Activated CD8-positive, alpha-beta T cell treated with anti-CD3 and anti-CD28 coated beads for 36 hours (primary cell): ENCODE measurements at regions of chr12 and their contacts with region 1.

Region 1: DNA sequence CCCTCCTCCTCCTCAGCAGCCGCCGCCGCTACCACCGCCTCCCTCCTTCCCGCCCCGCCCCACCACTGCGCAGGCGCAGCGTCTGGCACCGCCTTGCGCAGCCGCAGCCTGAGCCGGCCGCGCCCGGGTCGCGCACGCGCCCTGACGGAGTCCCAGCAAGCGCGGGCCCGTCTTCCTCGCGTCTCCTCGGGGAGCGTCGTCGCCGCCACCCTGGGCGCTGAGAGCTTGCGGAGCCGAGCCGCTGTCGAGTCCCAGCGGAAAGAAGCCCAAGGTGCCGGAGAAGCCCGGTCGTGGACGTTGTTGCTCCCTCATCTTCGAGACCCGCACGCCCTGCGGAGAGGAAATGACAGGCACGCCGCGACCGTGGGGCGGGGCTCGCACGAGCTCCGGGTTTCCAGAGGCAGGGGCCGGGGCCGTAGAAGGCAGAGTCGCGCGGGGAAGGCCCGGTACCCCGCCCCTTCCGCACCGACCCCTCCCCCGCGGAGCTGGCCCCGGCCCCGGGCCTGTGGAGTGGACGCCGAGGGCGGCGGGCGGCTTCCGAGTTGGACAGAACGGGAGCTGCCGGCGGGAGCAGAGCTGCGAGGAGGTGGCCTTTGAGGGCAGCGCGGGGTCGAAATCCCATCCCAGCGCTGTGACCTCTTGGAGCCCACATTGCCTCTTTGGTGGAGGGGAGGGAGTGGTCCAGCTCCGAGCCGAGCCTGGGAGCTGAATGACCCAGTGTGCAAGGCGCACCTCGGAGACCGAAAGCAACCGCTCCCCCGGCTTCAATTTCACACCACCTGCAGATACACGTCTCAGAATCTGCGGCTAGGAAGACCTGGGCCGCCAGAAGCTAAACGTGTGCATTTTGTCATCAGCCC is 469 bp upstream of the RAB35 start:
- DNase-seq: peak; percentile 96
- ATAC-seq: peak; percentile 83
- H3K4me3 Mint-ChIP-seq: peak overlapping the region; percentile 80
- H3K27ac Mint-ChIP-seq: peak overlapping the region; percentile 86
- H3K4me1 Mint-ChIP-seq: peaks cover 62% of the 10 kb centered on the region
- H3K27me3 Mint-ChIP-seq: no peaks in the 10 kb centered on the region
- CTCF ChIP-seq: no peak

Region 2: DNA sequence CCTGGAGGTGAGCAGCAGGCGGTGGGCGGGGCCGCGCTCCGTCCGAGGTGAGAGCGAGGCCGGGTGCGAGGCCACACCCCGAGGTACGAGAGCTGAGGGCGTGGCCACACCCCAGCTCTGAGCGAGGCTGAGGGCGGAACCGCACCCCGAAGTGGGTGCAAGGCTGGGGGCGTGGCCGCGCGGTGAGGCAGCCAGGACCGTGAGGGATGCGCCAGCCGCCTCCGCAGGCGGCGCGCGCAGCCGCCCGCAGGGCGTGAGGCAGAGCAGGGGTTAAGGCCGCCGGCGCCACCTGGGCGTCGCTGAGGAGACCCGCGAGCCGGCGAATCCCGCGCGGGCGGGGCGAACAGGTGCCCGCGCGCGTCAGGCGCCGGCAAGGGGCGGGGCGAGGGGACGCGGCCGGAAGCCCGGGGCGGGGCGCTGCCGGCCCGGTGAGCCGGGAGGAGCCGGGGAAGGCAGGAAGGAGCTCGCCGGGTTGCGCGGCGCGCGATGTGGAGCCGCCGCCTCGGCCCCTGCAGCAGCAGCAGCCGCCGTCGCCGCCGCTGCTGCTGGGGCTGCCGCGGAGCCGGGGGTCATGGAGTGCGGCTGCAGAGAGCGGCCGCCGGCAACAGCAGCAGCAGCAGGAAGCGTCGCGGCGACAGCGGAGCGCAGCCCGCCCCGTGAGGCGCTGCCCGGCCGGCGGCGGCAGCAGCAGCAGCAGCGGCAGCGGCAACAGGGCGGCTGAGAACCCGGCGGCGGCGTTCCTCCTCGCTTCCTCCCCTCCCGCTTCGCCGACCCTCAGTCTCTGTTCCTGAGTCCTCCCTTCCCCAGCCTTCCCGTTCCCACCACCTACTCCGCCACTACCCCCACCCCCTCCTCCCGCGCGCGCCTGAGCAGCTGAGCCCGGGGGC is 128.0 kb before region 1 on chr12 and contains the start of gene BICDL1:
- CTCF ChIA-PET with region 1: interaction called, 3 read pairs
- POLR2A ChIA-PET with region 1: interaction called, 20 read pairs
- intact Hi-C with region 1: no loop called
- DNase-seq: peak; percentile 98
- ATAC-seq: peak; percentile 89
- H3K4me3 Mint-ChIP-seq: peak within 1 kb of the TSS; percentile 89
- H3K27ac Mint-ChIP-seq: peak within 1 kb of the TSS; percentile 90
- H3K4me1 Mint-ChIP-seq: peaks cover 40% of the 10 kb centered on the region
- H3K27me3 Mint-ChIP-seq: no peaks in the 10 kb centered on the region
- CTCF ChIP-seq: no peak
- total RNA-seq, gene BICDL1: 103 to 107 TPM

Region 3: GRCh38 chr12:120039711-120040110 is 77.3 kb before region 1 on chr12:
- CTCF ChIA-PET with region 1: no interaction called
- POLR2A ChIA-PET with region 1: no interaction called
- intact Hi-C with region 1: no loop called
- DNase-seq: no peak
- ATAC-seq: no peak
- H3K4me3 Mint-ChIP-seq: no peak overlapping the region
- H3K27ac Mint-ChIP-seq: no peak overlapping the region
- H3K4me1 Mint-ChIP-seq: peaks cover 25% of the 10 kb centered on the region
- H3K27me3 Mint-ChIP-seq: no peaks in the 10 kb centered on the region
- CTCF ChIP-seq: no peak

Region 4: DNA sequence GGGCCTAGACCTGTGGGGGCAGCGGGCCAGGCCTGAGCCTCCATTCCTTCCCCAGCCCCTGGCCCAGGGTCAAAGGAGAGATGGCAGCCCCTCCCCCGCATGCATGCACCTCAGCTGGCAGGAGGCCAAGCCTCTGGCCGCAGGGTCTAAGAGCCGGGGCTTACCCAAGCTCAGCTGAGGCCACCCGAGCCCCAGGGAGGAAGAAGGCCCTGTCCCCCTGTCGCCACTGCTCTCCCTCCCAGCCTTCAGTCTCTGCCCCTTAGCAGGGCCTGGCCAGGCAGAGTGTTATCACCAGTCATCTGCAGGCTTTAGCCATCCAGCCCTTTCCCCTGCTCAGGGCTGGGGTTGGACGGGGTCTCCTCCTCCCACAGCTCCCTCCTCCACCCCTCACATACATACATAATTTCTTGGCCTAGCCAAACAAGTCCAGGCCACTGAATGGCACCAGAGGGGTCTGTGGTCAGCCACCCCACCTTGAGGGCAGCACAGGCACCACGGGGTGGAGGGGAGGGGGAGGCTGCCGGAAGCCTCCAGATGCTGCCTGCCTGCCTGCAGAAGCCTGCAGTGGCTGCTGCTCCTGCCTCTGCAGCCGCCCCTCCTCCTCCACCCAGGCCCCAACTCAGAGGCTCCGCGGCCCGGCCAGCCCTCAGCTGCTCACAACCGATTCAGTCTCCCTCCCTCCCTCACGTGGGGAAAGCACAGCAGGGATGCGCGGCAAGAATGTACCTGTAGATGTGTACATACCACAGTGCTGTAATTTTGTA is 23.2 kb before region 1 on chr12:
- CTCF ChIA-PET with region 1: no interaction called
- POLR2A ChIA-PET with region 1: interaction called, 16 read pairs
- intact Hi-C with region 1: no loop called
- DNase-seq: no peak
- ATAC-seq: peak; percentile 29
- H3K4me3 Mint-ChIP-seq: no peak overlapping the region
- H3K27ac Mint-ChIP-seq: peak overlapping the region; percentile 55
- H3K4me1 Mint-ChIP-seq: peaks cover 4% of the 10 kb centered on the region
- H3K27me3 Mint-ChIP-seq: no peaks in the 10 kb centered on the region
- CTCF ChIP-seq: no peak

Region 5: GRCh38 chr12:120100435-120101029 is 16.5 kb before region 1 on chr12:
- CTCF ChIA-PET with region 1: interaction called, 3 read pairs
- POLR2A ChIA-PET with region 1: interaction called, 47 read pairs
- intact Hi-C with region 1: no loop called
- DNase-seq: no peak
- ATAC-seq: no peak
- H3K4me3 Mint-ChIP-seq: no peak overlapping the region
- H3K27ac Mint-ChIP-seq: no peak overlapping the region
- H3K4me1 Mint-ChIP-seq: peaks cover 15% of the 10 kb centered on the region
- H3K27me3 Mint-ChIP-seq: no peaks in the 10 kb centered on the region
- CTCF ChIP-seq: no peak

Region 6: GRCh38 chr12:120321382-120322202 is 204.6 kb after region 1 on chr12:
- CTCF ChIA-PET with region 1: no interaction called
- POLR2A ChIA-PET with region 1: no interaction called
- intact Hi-C with region 1: no loop called
- DNase-seq: no peak
- ATAC-seq: no peak
- H3K4me3 Mint-ChIP-seq: no peak overlapping the region
- H3K27ac Mint-ChIP-seq: no peak overlapping the region
- H3K4me1 Mint-ChIP-seq: peaks cover 17% of the 10 kb centered on the region
- H3K27me3 Mint-ChIP-seq: no peaks in the 10 kb centered on the region
- CTCF ChIP-seq: no peak